GM10248 (cell line): ENCODE measurements at regions of chr16 and their contacts with region 1.

Region 1: DNA sequence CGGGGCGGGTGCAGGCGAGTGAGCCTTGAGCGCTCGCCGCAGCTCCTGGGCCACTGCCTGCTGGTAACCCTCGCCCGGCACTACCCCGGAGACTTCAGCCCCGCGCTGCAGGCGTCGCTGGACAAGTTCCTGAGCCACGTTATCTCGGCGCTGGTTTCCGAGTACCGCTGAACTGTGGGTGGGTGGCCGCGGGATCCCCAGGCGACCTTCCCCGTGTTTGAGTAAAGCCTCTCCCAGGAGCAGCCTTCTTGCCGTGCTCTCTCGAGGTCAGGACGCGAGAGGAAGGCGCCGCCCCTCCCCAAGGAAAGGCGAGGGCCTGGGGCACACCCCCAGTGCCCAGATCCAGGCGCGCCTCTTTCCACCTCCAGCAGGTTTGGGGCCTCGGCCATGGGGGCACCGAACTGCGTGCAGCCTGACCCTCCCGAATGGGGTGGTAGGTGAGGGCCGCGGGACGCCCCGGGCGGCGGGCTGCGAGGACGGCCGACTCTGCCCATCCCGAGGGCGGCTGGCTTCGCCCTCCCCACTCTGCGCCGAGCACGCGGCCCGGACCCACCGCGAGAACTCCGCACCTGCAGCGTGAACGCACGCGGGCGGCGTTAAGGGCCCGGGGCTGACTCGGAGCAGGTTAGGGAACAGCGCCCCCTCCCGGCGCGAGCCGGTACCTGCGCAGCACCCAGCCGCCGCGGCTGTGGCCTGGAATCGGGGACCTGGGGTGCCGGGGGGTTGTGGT is 844 bp downstream of the HBQ1 start:
- DNase-seq: peak; percentile 93
- CTCF ChIP-seq: peak; percentile 98

Region 2: DNA sequence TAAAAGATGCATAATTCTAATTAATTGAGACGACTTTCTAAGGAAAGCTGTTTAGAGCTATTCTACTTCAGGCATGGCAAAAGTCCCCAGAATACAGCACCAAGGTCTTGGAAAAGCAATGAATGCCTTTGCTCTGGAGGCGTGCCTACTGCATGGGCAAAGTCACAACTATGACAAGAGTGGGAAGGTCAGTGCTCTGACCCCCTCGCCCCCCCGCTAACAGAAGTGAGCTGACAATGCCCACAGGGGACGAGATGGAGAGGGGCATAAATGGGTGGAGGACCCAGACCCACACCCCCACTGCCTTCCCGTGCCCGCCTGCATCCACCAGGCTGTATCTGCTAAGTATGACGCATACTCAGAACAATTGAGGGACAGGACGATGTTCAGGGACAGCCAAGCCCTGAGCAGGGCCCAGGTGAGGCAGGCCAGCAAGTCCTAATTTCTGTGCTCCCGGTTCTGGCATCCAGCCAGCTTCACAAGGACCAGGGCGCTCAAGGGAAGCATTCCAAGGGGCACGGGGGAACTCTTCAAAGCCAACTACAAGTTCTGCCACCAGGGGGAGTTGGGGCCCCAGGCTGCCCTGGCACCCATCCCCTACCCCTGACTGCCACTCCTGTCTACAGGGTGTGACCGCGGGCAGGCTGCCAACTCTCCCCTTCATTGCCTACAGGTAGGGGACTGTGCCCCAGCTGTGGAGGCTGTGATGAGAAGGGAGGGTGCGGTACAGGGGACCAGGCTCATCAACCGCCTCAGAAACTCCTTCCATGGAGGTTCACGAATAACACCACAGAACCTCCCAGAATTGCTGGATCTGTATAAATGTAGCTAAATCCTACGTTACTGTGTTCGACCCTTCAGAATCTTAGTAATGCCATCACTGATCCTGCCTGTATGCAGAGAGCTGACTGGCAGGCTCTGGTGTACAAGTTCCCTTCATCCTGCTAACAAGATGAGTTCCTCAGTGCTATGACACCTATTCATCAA is 63.4 kb before region 1 on chr16:
- CTCF ChIA-PET with region 1: interaction called, 12 read pairs
- POLR2A ChIA-PET with region 1: no interaction called
- DNase-seq: peak; percentile 67
- CTCF ChIP-seq: peak; percentile 58

Region 3: GRCh38 chr16:168424-168823 is 12.7 kb before region 1 on chr16:
- CTCF ChIA-PET with region 1: interaction called, 11 read pairs
- POLR2A ChIA-PET with region 1: no interaction called
- DNase-seq: no peak
- CTCF ChIP-seq: no peak

Region 4: GRCh38 chr16:191854-192550 is 10.9 kb after region 1 on chr16:
- CTCF ChIA-PET with region 1: interaction called, 11 read pairs
- POLR2A ChIA-PET with region 1: no interaction called
- DNase-seq: peak; percentile 11
- CTCF ChIP-seq: no peak